ENCODE measurements at regions of chr1 and their contacts with region 1.

Region 1: DNA sequence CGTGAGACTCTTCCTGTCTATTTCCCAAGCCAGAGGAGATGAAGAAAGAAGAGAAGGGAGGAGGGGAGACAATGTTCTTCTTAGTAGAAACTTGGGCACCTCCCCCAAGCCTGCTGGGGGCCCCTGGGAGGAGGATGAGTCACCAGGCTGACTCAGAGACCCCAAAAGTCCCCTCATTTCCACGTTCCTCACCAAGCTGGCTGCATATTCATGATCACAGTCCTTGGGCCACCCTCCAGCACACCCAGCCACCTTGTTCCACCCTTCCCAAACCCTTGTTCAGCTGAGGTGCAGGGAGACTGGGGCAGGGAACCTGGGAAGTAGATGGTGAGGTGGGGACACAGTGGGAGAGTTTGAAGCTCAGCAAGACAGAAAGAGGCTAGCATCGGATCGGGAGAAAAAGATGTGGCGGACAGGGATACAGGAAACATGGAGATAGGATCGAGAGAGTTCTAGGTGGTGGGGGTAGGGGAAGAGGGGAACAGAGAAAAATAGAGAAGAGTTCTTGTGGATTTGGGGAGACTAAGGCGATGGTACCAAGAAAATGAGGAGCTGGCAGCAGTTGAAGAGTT is 712 bp downstream of the RAB13 start:
- DNase-seq: no peak
- ATAC-seq: peak; percentile 22
- H3K4me3 ChIP-seq: peak overlapping the region; percentile 80; the same call in 1 of the 2 replicates
- H3K27ac ChIP-seq: no peak overlapping the region
- H3K4me1 ChIP-seq: peaks cover 5% of the 10 kb centered on the region
- H3K27me3 ChIP-seq: no peaks in the 10 kb centered on the region
- CTCF ChIP-seq: no peak
- EP300 ChIP-seq: no peak
- POLR2A ChIP-seq: no peak
- RAD21 ChIP-seq: no peak

Region 2: DNA sequence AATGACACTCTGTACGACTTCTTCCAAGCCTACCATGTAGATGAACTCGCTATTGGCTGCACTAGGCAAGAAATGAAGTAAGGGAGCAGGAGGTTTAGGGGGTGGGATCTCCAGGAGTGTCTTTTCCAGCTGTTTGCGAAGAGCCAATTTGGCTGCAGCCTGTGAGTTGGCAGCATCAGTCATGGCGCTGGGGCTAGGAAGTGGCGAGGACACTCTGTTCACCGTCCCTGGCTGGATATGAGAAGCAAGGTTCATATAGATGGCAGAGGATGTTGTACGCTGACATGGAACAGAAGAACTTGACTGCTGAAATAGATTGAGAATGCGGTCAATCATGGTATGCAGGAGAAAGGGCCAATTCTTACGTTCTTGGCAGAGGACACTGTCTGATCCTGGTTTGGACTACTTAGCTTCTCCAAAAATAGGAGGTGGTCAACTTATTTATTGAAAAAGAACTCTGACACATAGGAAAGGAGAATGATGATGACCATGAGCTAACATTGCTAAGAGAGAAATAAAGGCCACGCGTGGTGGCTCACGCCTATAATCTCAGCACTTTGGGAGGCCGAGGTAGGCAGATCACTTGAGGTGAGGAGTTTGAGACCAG is 169.0 kb before region 1 on chr1:
- CTCF ChIA-PET with region 1: interaction called, 16 read pairs
- POLR2A ChIA-PET with region 1: no interaction called
- RAD21 ChIA-PET with region 1: interaction called, 12 read pairs
- SMC1A ChIA-PET with region 1: interaction called, 8 read pairs
- in situ Hi-C with region 1: no loop called
- intact Hi-C with region 1: loop called (anchors 1 kb)
- DNase-seq: no peak
- ATAC-seq: no peak
- H3K4me3 ChIP-seq: no peak overlapping the region
- H3K27ac ChIP-seq: no peak overlapping the region
- H3K4me1 ChIP-seq: no peaks in the 10 kb centered on the region; the same call in 1 of the 2 replicates
- H3K27me3 ChIP-seq: no peaks in the 10 kb centered on the region
- CTCF ChIP-seq: no peak
- EP300 ChIP-seq: no peak
- POLR2A ChIP-seq: no peak
- RAD21 ChIP-seq: no peak

Region 3: GRCh38 chr1:154304664-154305337 is 319.4 kb after region 1 on chr1:
- CTCF ChIA-PET with region 1: no interaction called
- POLR2A ChIA-PET with region 1: no interaction called
- RAD21 ChIA-PET with region 1: no interaction called
- SMC1A ChIA-PET with region 1: no interaction called
- in situ Hi-C with region 1: no loop called
- intact Hi-C with region 1: no loop called
- DNase-seq: no peak
- ATAC-seq: peak; percentile 87
- H3K4me3 ChIP-seq: no peak overlapping the region
- H3K27ac ChIP-seq: no peak overlapping the region
- H3K4me1 ChIP-seq: no peaks in the 10 kb centered on the region
- H3K27me3 ChIP-seq: no peaks in the 10 kb centered on the region
- CTCF ChIP-seq: no peak
- EP300 ChIP-seq: no peak
- POLR2A ChIP-seq: no peak
- RAD21 ChIP-seq: no peak

Measured in GM12878 (cell line).